CD8-positive, alpha-beta T cell (primary cell): ENCODE measurements at regions of chr2 and their contacts with region 1.

Region 1: GRCh38 chr2:143128681-143129580 is at the start of gene ARHGAP15:
- DNase-seq: peak; percentile 34 to 93 (median 70)
- ATAC-seq: peak; percentile 84
- H3K4me3 ChIP-seq: peak within 1 kb of the TSS; percentile 48 to 62
- H3K4me3 Mint-ChIP-seq: peak within 1 kb of the TSS; percentile 82
- H3K27ac ChIP-seq: peak within 1 kb of the TSS; percentile 81 to 93
- H3K27ac Mint-ChIP-seq: peak within 1 kb of the TSS; percentile 99
- H3K4me1 ChIP-seq: peaks cover 62% of the 10 kb centered on the region
- H3K4me1 Mint-ChIP-seq: peaks cover 54% of the 10 kb centered on the region
- H3K27me3 ChIP-seq: no peaks in the 10 kb centered on the region
- H3K27me3 Mint-ChIP-seq: no peaks in the 10 kb centered on the region
- CTCF ChIP-seq: no peak
- total RNA-seq, gene ARHGAP15: 115 to 119 TPM

Region 2: GRCh38 chr2:143140864-143141661 is 12.1 kb after region 1 on chr2:
- CTCF ChIA-PET with region 1: interaction called, 3 read pairs
- POLR2A ChIA-PET with region 1: interaction called, 5 read pairs
- intact Hi-C with region 1: loop called (anchors 1 to 2 kb)
- DNase-seq: no peak
- ATAC-seq: no peak
- H3K4me3 ChIP-seq: peak overlapping the region in 1 of 2 experiments; percentile 5
- H3K4me3 Mint-ChIP-seq: peak overlapping the region; percentile 77
- H3K27ac ChIP-seq: no peak overlapping the region
- H3K27ac Mint-ChIP-seq: peak overlapping the region; percentile 85
- H3K4me1 ChIP-seq: peaks cover 76% of the 10 kb centered on the region
- H3K4me1 Mint-ChIP-seq: peaks cover 87% of the 10 kb centered on the region
- H3K27me3 ChIP-seq: no peaks in the 10 kb centered on the region
- H3K27me3 Mint-ChIP-seq: no peaks in the 10 kb centered on the region
- CTCF ChIP-seq: no peak

Region 3: DNA sequence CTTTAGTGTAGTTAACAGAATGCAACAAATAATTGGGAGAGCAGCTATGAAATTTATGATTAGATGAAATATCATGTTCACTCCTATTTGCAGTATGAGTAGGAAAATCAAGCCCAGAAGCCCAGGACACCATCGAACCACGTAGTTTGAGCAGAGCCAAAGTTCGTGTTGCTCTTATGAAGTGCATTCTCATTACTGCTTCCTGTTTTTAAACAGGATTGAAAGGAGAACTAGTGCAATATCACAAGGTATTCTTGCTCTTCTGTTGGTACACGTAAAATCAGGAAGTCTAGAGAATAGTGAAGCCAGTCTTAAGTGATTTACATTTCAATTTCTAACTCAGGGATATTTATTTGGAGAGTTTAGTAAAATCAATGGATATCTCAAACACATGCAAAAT is 21.4 kb after region 1 on chr2:
- CTCF ChIA-PET with region 1: interaction called, 6 read pairs
- POLR2A ChIA-PET with region 1: interaction called, 8 read pairs
- intact Hi-C with region 1: loop called (anchors 1 to 2 kb)
- DNase-seq: peak in 1 of 9 experiments; percentile 43
- ATAC-seq: peak; percentile 47
- H3K4me3 ChIP-seq: no peak overlapping the region
- H3K4me3 Mint-ChIP-seq: peak overlapping the region; percentile 53
- H3K27ac ChIP-seq: peak overlapping the region; percentile 2 to 38
- H3K27ac Mint-ChIP-seq: peak overlapping the region; percentile 85
- H3K4me1 ChIP-seq: peaks cover 90% of the 10 kb centered on the region
- H3K4me1 Mint-ChIP-seq: peaks cover 87% of the 10 kb centered on the region
- H3K27me3 ChIP-seq: no peaks in the 10 kb centered on the region
- H3K27me3 Mint-ChIP-seq: no peaks in the 10 kb centered on the region
- CTCF ChIP-seq: no peak

Region 4: GRCh38 chr2:144320491-144320890 is 1191.6 kb after region 1 on chr2:
- CTCF ChIA-PET with region 1: no interaction called
- POLR2A ChIA-PET with region 1: no interaction called
- intact Hi-C with region 1: loop called (anchors 10 kb)
- DNase-seq: peak in 8 of 9 experiments; percentile 41 to 87 (median 72)
- ATAC-seq: peak; percentile 53
- H3K4me3 ChIP-seq: no peak overlapping the region
- H3K4me3 Mint-ChIP-seq: peak overlapping the region; percentile 27
- H3K27ac ChIP-seq: peak overlapping the region in 1 of 2 experiments; percentile 64
- H3K27ac Mint-ChIP-seq: peak overlapping the region; percentile 86
- H3K4me1 ChIP-seq: peaks cover 29% of the 10 kb centered on the region
- H3K4me1 Mint-ChIP-seq: peaks cover 55% of the 10 kb centered on the region
- H3K27me3 ChIP-seq: no peaks in the 10 kb centered on the region
- H3K27me3 Mint-ChIP-seq: no peaks in the 10 kb centered on the region
- CTCF ChIP-seq: no peak